ENCODE measurements at regions of chr1 and their contacts with region 1.

Region 1: DNA sequence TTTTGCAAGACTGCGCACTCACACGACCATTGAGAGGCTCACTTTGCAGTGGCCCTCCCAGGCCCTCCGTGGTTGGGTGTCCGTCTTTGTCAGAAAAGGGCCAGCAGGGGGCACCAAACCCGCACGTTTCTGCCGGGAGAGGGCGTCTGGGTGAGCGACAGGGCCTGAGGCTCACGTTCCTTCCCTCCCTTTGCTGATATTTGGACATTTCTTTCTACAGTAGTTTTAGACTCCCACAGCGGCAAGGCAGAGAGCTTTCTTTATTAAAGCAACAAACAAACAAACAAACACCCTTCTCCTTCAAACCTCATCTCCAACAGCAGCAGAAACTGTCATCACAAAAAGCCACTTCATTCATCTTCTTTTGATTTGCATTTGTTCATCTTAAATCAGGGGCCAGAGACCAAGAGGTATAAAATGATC is 79.2 kb upstream of the WDR26 start:
- H3K4me3 ChIP-seq: no peak overlapping the region
- H3K27ac ChIP-seq: no peak overlapping the region
- H3K4me1 ChIP-seq: 0 out of 2 replicates have a peak, but pooled peaks cover 3% of the 10 kb centered on the region
- CTCF ChIP-seq: peak; percentile 100

Region 2: GRCh38 chr1:224497714-224498573 is 15.9 kb before region 1 on chr1:
- CTCF ChIA-PET with region 1: interaction called, 50 read pairs
- POLR2A ChIA-PET with region 1: no interaction called
- H3K4me3 ChIP-seq: no peak overlapping the region
- H3K27ac ChIP-seq: no peak overlapping the region
- H3K4me1 ChIP-seq: peaks cover 13% of the 10 kb centered on the region
- CTCF ChIP-seq: no peak

Region 3: GRCh38 chr1:224592636-224593582 is 79.1 kb after region 1 on chr1:
- CTCF ChIA-PET with region 1: interaction called, 12 read pairs
- POLR2A ChIA-PET with region 1: no interaction called
- H3K4me3 ChIP-seq: no peak overlapping the region
- H3K27ac ChIP-seq: no peak overlapping the region
- H3K4me1 ChIP-seq: no peaks in the 10 kb centered on the region
- CTCF ChIP-seq: no peak

Region 4: DNA sequence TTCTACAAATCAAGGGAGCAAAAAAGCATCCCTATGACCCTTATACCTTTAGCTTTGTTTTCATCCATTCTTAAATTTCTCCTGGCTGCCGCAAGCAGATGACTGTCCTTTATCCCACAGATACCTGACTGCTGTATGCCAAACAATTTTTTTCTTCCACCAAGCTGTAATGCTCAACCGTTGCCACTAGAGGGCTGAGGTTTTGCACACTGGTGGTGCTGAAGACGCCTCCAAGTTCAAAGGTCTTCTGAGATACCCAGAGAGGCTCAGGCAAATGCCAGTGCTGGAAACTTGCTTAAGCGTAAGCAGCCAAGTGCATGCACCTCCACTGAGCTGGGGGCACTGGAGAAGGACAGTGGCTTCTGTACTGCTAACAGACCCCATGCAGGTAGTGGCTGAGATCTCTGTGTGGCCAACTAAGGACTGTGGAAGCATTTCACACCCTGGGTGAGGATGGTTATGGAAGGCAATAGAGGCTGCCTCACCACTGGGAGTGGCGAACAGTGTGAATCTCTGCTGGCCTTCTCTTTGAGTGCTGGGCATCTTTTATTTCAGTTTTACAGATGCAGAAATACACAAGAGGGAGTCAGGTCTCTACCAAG is 130.9 kb after region 1 on chr1:
- CTCF ChIA-PET with region 1: interaction called, 51 read pairs
- POLR2A ChIA-PET with region 1: no interaction called
- H3K4me3 ChIP-seq: no peak overlapping the region
- H3K27ac ChIP-seq: no peak overlapping the region
- H3K4me1 ChIP-seq: no peaks in the 10 kb centered on the region
- CTCF ChIP-seq: peak; percentile 83

Region 5: DNA sequence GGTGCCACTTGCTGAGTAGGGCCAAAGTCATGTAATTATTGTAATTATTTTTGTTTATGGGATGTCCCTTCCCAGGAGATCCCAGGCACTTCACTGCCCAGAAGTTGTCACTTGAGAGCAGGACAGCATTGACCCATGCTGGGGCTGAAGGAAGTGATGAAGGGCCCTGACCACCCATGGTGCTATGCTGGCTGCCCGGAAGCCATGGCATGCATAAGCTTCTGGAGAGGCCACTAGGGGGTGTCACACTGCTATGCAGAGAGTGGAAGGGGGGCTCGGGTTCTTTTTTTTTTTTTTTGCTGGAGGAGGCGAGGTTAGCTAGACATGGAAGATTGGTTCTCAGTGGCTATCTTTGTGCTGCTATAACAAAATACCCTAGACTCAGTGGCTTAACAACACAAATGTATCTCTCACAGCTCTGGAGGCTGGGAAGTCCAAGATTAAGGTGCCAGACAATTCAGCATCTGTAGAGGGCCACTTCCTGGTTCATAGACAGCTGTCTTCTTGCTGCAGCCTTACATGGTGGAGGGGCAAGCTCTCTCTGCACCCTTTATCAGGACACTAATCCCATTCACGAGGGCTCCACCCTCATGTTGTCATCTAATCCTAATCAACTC is 187.2 kb after region 1 on chr1:
- CTCF ChIA-PET with region 1: interaction called, 12 read pairs
- POLR2A ChIA-PET with region 1: no interaction called
- H3K4me3 ChIP-seq: no peak overlapping the region
- H3K27ac ChIP-seq: no peak overlapping the region
- H3K4me1 ChIP-seq: no peaks in the 10 kb centered on the region
- CTCF ChIP-seq: peak; percentile 56

Region 6: DNA sequence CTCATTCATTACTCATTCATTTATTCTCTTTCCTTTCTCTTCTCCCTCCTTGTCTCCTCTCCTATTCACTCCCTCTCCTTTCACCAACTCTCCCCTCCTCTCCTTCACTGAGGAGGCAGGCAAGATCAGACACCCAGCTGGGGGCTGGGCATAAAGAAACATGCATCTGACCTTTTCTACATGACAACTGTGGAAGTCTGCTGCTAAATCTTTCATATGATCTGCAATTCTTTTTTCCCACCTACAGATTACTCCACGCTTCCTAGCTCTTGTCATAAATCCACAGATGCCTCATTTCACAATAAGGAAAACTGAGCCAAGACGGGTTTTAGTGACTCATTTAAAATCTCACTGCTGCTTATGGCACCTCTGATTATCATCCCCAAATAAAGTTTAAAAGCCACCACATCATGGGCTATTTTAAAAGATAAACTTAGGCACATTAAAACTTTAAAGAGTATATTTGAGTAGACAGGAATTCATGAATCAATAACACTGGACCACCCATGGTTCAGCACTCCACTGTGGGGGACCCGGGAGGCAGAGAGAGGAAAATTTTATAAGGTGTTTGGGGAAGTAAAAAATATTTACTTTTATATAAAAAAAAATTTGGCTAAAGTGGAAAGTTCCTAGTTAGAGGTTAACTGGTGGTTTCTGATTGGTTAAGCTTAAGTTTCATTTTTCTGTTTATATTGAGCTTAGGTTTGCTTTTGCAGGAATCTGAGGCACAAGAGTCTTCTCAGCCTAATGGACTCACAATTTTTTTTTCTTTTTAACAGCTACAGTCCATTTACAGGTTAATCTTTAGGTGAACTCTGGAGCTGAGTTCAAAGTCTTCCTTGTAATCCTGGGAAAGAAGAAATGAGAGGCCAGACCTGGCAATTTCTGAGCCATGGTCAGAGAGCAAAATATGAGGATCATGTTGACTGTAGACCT is 359.9 kb after region 1 on chr1:
- CTCF ChIA-PET with region 1: interaction called, 14 read pairs
- POLR2A ChIA-PET with region 1: no interaction called
- H3K4me3 ChIP-seq: no peak overlapping the region
- H3K27ac ChIP-seq: peak overlapping the region; percentile 64
- H3K4me1 ChIP-seq: peaks cover 31% of the 10 kb centered on the region
- CTCF ChIP-seq: no peak

Region 7: DNA sequence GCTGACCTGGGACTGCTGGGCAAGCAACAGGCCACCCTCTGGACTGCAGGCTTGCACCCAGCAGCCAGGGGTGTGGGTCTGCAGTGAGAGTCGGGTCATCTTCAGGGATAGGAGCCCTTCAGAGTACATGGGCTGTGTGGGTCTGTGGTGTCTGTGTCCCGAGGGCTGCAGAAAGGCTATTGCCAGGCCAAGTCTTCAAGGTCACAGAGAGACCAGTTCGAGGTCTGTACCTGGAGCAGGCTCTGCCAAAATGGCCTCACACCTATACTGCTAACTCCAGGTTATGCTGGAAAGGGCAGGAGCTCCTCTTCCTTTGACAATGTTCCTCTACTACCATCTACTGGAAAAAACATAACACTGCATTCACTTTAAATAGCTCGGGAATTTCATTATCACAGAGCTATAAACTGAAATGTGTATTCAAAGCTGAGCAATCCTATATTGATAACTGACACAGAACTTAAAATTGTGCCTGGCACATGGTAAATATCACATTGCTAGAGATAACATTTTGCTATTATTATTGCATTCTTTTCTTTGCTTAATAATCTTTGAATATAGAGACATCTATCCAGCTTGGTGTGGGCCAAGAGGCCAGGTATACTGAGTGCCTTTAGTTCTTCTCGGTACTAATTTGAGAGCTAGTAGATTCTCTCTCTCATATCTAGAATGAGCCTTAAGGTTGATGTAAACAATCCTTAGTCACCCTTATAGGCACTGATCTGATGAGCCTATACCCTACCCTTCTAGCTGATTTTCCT is 408.8 kb after region 1 on chr1:
- CTCF ChIA-PET with region 1: interaction called, 165 read pairs
- POLR2A ChIA-PET with region 1: interaction called, 3 read pairs
- H3K4me3 ChIP-seq: no peak overlapping the region
- H3K27ac ChIP-seq: no peak overlapping the region
- H3K4me1 ChIP-seq: no peaks in the 10 kb centered on the region
- CTCF ChIP-seq: peak; percentile 87